ENCODE measurements at regions of chr7 and their contacts with region 1.

Region 1: GRCh38 chr7:151468217-151469018 is 28.5 kb upstream of the CRYGN start:
- DNase-seq: no peak
- ATAC-seq: no peak
- H3K4me3 ChIP-seq: no peak overlapping the region
- H3K27ac ChIP-seq: peak overlapping the region; percentile 66
- H3K4me1 ChIP-seq: peaks cover 27% of the 10 kb centered on the region
- H3K27me3 ChIP-seq: no peaks in the 10 kb centered on the region
- CTCF ChIP-seq: no peak

Region 2: DNA sequence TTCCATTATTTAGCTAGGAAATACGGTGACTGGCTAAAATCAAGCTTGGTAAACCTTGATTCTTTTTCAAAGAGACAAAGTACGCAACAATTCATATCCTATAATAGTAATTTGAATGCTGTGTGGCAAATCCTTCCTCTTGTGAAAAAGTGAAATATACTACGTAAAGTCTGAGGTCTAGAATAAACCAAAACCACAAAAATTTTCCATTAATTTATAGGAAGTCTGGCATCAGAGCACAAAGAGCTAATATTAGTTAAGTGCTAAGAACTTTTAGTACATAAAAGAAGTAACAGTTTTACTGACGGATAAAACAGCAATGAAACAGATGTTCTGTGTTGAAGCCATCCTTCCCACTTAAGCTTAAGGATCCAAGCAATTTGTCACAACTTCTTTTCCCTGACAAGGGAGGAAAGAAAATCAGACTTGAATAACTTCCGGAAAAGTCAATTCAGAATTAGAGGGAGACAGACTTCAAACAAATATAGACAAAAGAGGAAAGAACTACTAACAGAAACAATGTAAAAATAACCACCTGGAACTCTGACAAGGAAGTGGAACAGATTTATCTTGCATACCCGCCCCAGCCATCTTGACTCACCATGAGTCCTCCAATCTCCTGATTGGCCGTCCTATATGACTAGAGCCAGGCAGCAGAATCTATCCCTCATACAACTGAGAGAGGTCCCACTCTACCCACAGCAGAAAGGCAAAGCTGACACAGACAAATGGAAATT is 16.7 kb after region 1 on chr7:
- intact Hi-C with region 1: no loop called
- DNase-seq: no peak
- ATAC-seq: peak; percentile 63 to 81 (median 72)
- H3K4me3 ChIP-seq: no peak overlapping the region
- H3K27ac ChIP-seq: peak overlapping the region; percentile 4
- H3K4me1 ChIP-seq: peaks cover 42% of the 10 kb centered on the region
- H3K27me3 ChIP-seq: no peaks in the 10 kb centered on the region
- CTCF ChIP-seq: no peak

Region 3: DNA sequence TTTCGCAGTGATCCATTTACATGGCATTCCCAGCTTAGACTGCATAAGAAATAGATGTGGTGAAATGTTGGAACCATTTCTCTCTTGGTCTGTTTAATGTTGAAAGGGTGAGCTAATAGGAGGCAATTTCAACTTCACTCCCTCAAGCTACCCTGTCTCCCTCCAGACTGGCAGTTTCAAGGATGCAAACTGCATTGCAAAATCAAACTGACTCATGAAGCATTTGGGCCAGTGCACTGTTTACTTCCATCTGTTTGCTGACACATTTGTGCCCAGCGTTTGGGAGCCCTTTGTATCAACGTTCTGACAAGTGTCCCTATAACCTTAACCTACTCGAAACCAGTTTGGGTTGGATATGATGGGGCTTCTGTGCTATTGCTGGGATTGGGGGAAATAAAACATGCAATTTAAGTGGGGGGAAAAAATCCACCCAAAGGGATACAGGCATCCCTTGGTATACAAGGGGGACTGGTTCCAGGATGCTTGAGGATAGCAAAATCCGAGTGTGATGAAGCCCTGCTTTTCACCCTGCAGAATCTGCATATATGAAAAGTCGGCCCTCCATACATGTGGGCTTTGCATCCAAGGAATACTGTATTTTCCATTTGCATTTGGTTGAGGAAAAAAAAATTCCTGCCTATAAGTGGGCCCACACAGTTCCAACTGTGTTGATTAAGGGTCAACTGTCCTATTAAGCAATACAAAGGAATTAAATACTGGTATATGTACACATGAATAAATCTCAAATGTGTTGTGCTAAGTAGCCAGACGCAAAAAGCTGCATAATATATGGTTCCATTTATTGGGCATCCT is 35.7 kb after region 1 on chr7:
- intact Hi-C with region 1: loop called (anchors 5 kb)
- DNase-seq: peak in 1 of 2 donors; percentile 32
- ATAC-seq: peak; percentile 86 to 96 (median 90)
- H3K4me3 ChIP-seq: no peak overlapping the region
- H3K27ac ChIP-seq: peak overlapping the region; percentile 79
- H3K4me1 ChIP-seq: peaks cover 80% of the 10 kb centered on the region
- H3K27me3 ChIP-seq: no peaks in the 10 kb centered on the region
- CTCF ChIP-seq: no peak

Region 4: GRCh38 chr7:151511946-151512345 is 43.5 kb after region 1 on chr7:
- intact Hi-C with region 1: loop called in 1 of 2 experiments (anchors 5 kb)
- DNase-seq: no peak
- ATAC-seq: peak; percentile 2 to 63 (median 16)
- H3K4me3 ChIP-seq: no peak overlapping the region
- H3K27ac ChIP-seq: peak overlapping the region; percentile 52
- H3K4me1 ChIP-seq: peaks cover 90% of the 10 kb centered on the region
- H3K27me3 ChIP-seq: no peaks in the 10 kb centered on the region
- CTCF ChIP-seq: no peak

Region 5: DNA sequence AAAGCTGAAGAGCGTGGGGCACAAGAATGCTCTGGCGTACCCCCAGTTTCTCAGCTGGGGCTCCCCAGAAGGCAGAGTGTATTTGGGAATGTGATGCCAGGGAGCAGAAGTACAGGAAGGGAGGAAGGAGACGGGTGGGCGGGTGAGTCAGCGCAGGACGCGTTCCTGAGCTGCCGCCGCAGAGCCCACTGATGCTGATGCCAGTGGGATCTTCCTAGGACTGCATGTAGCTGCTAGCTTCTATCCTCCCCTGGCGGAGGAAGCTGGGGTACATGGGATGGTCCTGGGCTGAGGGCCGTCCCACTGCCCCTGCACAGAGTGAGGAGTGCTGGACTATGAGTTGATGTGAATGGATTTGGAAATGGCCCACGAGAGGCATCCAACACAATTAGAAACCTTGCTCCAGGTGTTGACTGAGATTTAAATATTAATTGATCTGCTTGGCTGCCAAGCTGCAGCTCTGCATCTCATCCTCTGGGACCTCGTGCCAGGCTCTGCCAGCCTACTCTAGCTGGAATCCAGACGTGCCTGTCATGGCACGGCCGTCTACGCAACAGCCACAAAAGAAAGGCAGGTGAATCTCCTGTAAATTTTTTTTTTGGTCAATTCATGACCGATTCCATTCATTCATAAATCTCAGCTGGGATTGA is 117.5 kb after region 1 on chr7:
- intact Hi-C with region 1: no loop called
- DNase-seq: no peak
- ATAC-seq: no peak
- H3K4me3 ChIP-seq: no peak overlapping the region
- H3K27ac ChIP-seq: no peak overlapping the region
- H3K4me1 ChIP-seq: no peaks in the 10 kb centered on the region
- H3K27me3 ChIP-seq: no peaks in the 10 kb centered on the region
- CTCF ChIP-seq: no peak